ENCODE measurements at regions of chr5 and their contacts with region 1.

Region 1: DNA sequence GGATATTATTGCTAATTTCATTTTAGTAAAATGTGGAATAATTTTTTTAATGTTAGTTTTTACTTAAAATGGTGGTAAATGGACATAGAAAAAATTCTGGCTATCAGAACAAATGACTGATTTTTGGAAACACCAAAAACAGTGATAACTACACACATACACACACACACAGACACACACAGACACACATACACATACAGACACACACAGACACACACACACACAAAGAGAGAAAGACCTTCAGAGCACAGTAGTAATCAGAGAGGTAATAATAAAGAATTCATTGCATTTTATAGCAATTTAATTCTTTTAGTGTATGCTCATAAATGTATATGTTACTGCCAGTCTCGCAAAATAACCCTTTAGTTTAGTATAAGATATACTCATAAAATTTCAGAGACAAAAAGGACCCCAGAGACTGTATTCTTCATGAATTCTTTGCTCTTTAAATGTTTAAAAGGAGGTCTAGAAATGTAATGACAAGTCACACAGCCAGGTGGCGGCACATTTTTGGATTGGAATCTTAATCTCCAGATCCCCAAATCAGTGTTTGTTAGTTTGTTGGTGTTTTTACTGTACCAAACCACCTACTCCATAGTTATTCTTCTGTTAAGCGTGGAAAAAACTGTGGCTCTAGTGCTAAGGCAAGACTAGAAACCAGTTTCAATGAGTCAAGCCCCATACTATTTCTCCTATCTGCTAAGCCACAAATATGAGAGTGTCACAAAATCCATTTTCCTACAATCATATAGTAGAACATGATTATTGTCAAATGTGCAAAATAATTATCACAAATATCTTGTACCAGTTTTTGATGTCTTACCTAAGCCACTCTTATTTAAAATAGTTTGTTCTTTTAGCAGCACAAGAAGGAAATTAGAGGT is 109.9 kb downstream of the EDIL3 start:
- DNase-seq: peak; percentile 14
- H3K4me3 ChIP-seq: no peak overlapping the region
- H3K27ac ChIP-seq: no peak overlapping the region
- H3K4me1 ChIP-seq: no peaks in the 10 kb centered on the region
- H3K27me3 ChIP-seq: peaks cover 3% of the 10 kb centered on the region
- CTCF ChIP-seq: peak; percentile 50 to 62

Region 2: GRCh38 chr5:84343171-84343570 is 68.3 kb after region 1 on chr5:
- CTCF ChIA-PET with region 1: no interaction called
- dilution Hi-C with region 1: no loop called
- in situ Hi-C with region 1: no loop called
- intact Hi-C with region 1: no loop called
- DNase-seq: no peak
- H3K4me3 ChIP-seq: no peak overlapping the region
- H3K27ac ChIP-seq: no peak overlapping the region
- H3K4me1 ChIP-seq: no peaks in the 10 kb centered on the region
- H3K27me3 ChIP-seq: peaks cover 13% of the 10 kb centered on the region
- CTCF ChIP-seq: no peak

Region 3: GRCh38 chr5:84382363-84383295 is 107.8 kb after region 1 on chr5:
- CTCF ChIA-PET with region 1: no interaction called
- dilution Hi-C with region 1: no loop called
- in situ Hi-C with region 1: no loop called
- intact Hi-C with region 1: loop called (anchors 5 kb)
- DNase-seq: peak; percentile 66
- H3K4me3 ChIP-seq: peak overlapping the region; percentile 32 to 51 (median 51)
- H3K27ac ChIP-seq: no peak overlapping the region
- H3K4me1 ChIP-seq: peaks cover 30% of the 10 kb centered on the region
- H3K27me3 ChIP-seq: peaks cover 24% of the 10 kb centered on the region
- CTCF ChIP-seq: no peak

Region 4: DNA sequence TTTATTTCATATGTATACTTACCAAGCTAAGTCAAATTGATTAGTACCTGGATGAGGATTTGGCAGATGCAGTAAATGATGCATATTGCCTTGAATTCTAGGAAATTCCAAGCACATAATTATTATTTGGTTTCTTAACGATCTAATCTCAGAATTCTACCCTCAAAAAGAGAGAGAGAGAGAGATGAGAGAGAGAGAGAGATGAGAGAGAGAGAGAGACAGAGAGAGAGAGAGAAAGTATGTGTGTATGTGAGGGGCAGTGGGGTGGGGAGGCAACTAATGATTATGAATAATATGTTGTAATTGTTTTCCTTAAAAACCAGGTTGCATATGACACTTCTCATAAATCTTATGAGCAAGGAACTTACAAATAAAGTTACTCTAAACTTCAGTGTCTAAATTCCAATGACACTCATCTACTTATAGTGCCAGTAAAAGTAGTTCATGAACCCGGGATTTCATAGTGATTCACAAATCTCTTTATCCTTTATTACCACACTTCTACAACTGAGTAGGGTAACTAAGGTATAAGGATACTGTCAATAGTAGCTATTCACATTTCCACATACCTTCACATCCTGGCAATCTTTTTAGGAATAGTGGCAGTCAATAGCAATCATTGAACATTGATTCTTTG is 170.3 kb after region 1 on chr5:
- CTCF ChIA-PET with region 1: no interaction called
- dilution Hi-C with region 1: no loop called
- in situ Hi-C with region 1: loop called (anchors 5 to 10 kb)
- intact Hi-C with region 1: no loop called
- DNase-seq: no peak
- H3K4me3 ChIP-seq: no peak overlapping the region
- H3K27ac ChIP-seq: no peak overlapping the region
- H3K4me1 ChIP-seq: no peaks in the 10 kb centered on the region
- H3K27me3 ChIP-seq: peaks cover 8% of the 10 kb centered on the region
- CTCF ChIP-seq: no peak

Region 5: GRCh38 chr5:84450617-84451414 is 176.0 kb after region 1 on chr5:
- CTCF ChIA-PET with region 1: no interaction called
- dilution Hi-C with region 1: no loop called
- in situ Hi-C with region 1: loop called (anchors 5 to 10 kb)
- intact Hi-C with region 1: loop called (anchors 1 kb)
- DNase-seq: no peak
- H3K4me3 ChIP-seq: no peak overlapping the region
- H3K27ac ChIP-seq: no peak overlapping the region
- H3K4me1 ChIP-seq: no peaks in the 10 kb centered on the region
- H3K27me3 ChIP-seq: peaks cover 4% of the 10 kb centered on the region
- CTCF ChIP-seq: peak; percentile 51 to 55

Region 6: GRCh38 chr5:85049020-85049419 is 774.2 kb after region 1 on chr5:
- CTCF ChIA-PET with region 1: interaction called, 3 read pairs
- dilution Hi-C with region 1: no loop called
- in situ Hi-C with region 1: no loop called
- intact Hi-C with region 1: loop called (anchors 1 kb)
- DNase-seq: peak; percentile 35
- H3K4me3 ChIP-seq: no peak overlapping the region
- H3K27ac ChIP-seq: no peak overlapping the region
- H3K4me1 ChIP-seq: no peaks in the 10 kb centered on the region
- H3K27me3 ChIP-seq: peaks cover 2% of the 10 kb centered on the region
- CTCF ChIP-seq: peak; percentile 35 to 62

Measured in mammary epithelial cell (primary cell).